HCT116 (cell line): ENCODE measurements at regions of chr7 and their contacts with region 1.

Region 1: GRCh38 chr7:13908667-13909397 is 80.6 kb downstream of the ETV1 start:
- DNase-seq: peak; percentile 68
- ATAC-seq: peak; percentile 74
- H3K4me3 ChIP-seq: no peak overlapping the region; a peak in 1 of 4 replicates
- H3K27ac ChIP-seq: peak overlapping the region; percentile 60
- H3K4me1 ChIP-seq: peaks cover 35 to 37% of the 10 kb centered on the region in 2 experiments
- H3K27me3 ChIP-seq: no peaks in the 10 kb centered on the region
- CTCF ChIP-seq: no peak
- POLR2A ChIP-seq: no peak
- RAD21 ChIP-seq: 0 out of 2 replicates have a peak, but pooled peaks have one; percentile 2

Region 2: GRCh38 chr7:13963925-13964324 is 55.1 kb after region 1 on chr7:
- CTCF ChIA-PET with region 1: no interaction called
- POLR2A ChIA-PET with region 1: no interaction called
- RAD21 ChIA-PET with region 1: no interaction called
- intact Hi-C with region 1: no loop called
- DNase-seq: no peak
- ATAC-seq: no peak
- H3K4me3 ChIP-seq: no peak overlapping the region
- H3K27ac ChIP-seq: no peak overlapping the region
- H3K4me1 ChIP-seq: no peaks in the 10 kb centered on the region
- H3K27me3 ChIP-seq: no peaks in the 10 kb centered on the region
- CTCF ChIP-seq: no peak
- POLR2A ChIP-seq: no peak
- RAD21 ChIP-seq: no peak

Region 3: DNA sequence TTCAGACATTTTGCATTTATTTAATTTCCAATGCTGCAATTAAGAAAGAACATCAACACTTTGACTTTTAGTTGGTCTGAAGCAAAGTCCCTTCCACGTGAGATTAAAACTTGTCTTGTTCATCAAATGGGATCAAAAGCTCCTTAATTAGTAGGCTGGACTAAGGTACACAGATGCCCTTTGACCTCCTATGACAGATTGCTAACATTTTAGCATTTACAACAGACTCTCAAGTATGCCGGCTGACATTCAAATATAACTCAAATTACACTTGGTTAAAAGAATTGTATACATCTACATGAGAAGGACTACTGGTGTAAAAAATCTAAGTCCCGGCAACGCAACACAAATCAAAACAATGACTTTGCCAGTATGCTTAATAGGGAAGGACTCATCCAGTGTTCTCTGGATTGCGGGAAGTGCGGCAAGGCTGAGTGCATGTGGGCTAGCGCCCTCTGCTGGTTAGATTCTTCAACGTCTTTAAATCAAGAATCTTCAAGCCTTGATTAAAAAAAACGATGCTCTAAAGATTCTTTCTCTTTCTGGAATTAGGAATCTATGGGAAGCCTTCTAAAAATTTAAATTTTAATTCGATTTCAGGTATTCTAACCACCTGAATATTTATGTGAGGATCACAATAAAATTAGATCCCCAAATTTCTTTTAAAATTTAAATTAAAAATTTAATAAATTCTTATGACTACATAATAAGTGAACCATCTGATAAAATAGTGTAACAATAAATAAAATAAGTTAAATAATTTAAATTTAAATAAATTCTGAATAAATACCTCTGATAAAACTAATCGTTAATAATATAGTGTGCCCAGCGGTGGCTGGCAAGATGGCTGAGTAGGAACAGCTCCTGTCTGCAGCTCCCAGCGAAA is 549.0 kb after region 1 on chr7:
- CTCF ChIA-PET with region 1: no interaction called
- POLR2A ChIA-PET with region 1: no interaction called
- RAD21 ChIA-PET with region 1: no interaction called
- intact Hi-C with region 1: loop called (anchors 10 kb)
- DNase-seq: peak; percentile 83
- ATAC-seq: peak; percentile 90
- H3K4me3 ChIP-seq: 0 out of 4 replicates have a peak overlapping the region, but pooled peaks of 1 of the 2 experiments have one; percentile 16
- H3K27ac ChIP-seq: no peak overlapping the region
- H3K4me1 ChIP-seq: peaks cover 3 to 4% of the 10 kb centered on the region in 2 experiments; a peak in 3 of 4 replicates
- H3K27me3 ChIP-seq: no peaks in the 10 kb centered on the region
- CTCF ChIP-seq: peak; percentile 60 to 80 (median 71)
- POLR2A ChIP-seq: no peak
- RAD21 ChIP-seq: peak; percentile 88